ENCODE measurements at regions of chr1 and their contacts with region 1.

Region 1: GRCh38 chr1:15139654-15140350 is 13.7 kb upstream of the TMEM51 start:
- DNase-seq: no peak
- H3K4me3 ChIP-seq: no peak overlapping the region
- CTCF ChIP-seq: no peak

Region 2: GRCh38 chr1:15062479-15063099 is 77.2 kb before region 1 on chr1:
- in situ Hi-C with region 1: no loop called
- DNase-seq: no peak
- H3K4me3 ChIP-seq: no peak overlapping the region
- CTCF ChIP-seq: peak; percentile 48

Region 3: DNA sequence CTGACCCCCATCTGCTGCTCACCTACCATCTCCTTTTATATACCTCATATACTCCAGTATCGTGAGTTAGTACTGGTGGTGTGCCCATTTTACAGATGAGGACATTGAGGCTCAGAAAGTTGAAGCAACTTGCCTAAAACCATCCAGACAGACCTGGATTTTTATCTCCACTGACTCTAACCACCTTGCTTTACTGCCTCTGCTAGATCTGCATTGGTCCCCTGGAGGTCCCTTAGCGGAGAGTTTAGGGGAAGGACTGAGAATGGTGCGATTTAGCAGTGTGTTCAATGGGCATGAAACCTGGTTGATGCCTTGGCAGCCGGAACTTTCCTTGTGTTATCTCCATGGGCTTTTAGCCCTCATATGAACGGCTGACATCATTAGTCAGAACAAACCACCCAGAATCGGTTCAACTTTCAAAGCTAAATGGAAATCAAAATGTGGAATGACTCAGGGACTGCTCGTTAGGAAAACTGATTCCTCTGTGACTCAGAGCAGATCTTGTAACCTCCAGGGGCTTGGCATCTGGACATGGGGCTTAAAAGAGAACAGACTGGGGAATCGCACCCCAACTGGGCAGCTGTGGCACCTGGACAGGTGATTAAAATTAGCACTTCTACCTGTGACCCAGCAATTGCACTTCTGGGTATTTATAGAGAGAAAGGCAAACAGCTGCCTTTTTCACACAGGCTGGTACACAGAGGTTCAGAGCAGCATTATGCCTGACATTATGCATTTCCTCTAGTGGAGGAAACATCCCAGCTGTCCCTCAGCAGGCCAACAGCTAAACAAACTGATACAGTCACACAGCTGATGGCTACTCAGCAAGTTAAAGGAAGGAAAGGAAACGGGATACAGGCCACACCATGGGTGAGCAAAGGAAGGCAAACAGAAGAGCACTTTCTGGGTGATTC is 39.0 kb after region 1 on chr1:
- in situ Hi-C with region 1: loop called (anchors 5 kb)
- DNase-seq: peak; percentile 88
- H3K4me3 ChIP-seq: no peak overlapping the region
- CTCF ChIP-seq: no peak

Measured in astrocyte of the cerebellum (primary cell).